Heart left ventricle (tissue), 16 donors: ENCODE measurements at regions of chr13 and their contacts with region 1.

Region 1: DNA sequence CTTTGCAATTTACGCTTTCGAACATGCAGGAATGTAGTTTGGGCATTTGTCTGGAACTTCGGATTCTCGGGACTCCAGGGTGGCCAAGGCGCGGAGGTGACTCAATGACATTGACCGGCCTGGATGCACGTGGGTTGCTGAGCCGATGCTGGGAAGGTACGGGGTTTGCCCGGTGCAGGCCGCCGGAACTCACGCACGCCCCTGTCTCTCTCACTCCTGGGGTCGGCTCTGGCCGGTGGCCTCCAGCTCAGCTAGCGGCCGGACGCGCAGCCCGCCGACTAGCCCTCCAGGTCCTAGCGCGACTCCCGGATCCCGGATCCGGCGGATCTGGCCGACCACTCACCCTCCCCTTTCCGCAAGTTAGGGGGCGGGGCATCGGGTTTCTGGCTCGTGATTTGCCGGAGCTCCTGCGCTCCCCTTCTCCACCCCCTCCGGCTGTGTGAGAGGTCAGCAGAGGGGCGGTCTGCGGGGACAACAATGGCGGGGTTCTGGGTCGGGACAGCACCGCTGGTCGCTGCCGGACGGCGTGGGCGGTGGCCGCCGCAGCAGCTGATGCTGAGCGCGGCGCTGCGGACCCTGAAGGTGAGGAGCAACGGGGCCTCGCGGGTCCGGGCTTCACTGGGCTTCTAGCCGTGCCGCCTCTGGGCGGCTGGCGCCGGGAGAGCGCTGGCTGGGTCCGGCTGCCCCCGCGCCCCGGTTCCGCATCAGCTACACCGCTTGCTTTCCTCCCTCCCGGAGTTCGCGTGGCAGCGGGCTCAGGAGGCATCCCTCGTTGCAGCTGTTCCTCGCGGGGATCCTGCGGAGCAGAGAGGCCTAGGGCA is at the start of gene PCCA:
- DNase-seq: peak; percentile 97 to 98 (median 97)
- ATAC-seq: peak; percentile 99 to 100 (median 100)
- H3K4me3 ChIP-seq: peak within 1 kb of the TSS; percentile 74 to 97 (median 90)
- H3K27ac ChIP-seq: peak within 1 kb of the TSS in 11 of 12 donors; percentile 68 to 84 (median 79)
- H3K4me1 ChIP-seq: peaks cover 0 to 32% (median 16%) of the 10 kb centered on the region in 12 donors
- H3K27me3 ChIP-seq: no peaks in the 10 kb centered on the region
- CTCF ChIP-seq: peak in 1 of 12 donors; percentile 15
- POLR2A ChIP-seq: peak in 1 of 2 donors; percentile 82
- total RNA-seq, gene PCCA: 30.7 to 67.0 (median 44.6) TPM

Region 2: DNA sequence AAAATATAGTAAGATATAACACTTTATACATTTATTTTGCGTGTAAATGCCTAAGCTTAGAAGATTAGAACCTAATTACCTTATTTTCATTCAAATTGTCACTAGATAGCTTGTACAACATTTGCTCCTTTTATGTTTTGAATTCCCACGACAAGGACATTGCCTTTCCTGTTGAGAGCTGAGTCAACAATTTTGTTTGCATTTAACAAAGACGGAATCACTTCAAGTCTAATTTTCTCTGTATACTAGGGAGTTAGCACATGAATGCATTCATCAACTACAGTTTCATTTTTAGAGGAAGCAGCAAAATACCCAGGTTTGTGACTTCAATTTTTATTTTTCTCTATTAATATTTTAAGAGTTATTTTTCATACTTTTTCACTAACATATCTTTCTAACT is 48.7 kb before region 1 on chr13:
- intact Hi-C with region 1: no loop called
- DNase-seq: no peak
- ATAC-seq: no peak
- H3K4me3 ChIP-seq: no peak overlapping the region
- H3K27ac ChIP-seq: no peak overlapping the region
- H3K4me1 ChIP-seq: no peaks in the 10 kb centered on the region
- H3K27me3 ChIP-seq: peaks cover 0 to 12% (median 0%) of the 10 kb centered on the region in 9 donors
- CTCF ChIP-seq: no peak
- POLR2A ChIP-seq: no peak

Region 3: DNA sequence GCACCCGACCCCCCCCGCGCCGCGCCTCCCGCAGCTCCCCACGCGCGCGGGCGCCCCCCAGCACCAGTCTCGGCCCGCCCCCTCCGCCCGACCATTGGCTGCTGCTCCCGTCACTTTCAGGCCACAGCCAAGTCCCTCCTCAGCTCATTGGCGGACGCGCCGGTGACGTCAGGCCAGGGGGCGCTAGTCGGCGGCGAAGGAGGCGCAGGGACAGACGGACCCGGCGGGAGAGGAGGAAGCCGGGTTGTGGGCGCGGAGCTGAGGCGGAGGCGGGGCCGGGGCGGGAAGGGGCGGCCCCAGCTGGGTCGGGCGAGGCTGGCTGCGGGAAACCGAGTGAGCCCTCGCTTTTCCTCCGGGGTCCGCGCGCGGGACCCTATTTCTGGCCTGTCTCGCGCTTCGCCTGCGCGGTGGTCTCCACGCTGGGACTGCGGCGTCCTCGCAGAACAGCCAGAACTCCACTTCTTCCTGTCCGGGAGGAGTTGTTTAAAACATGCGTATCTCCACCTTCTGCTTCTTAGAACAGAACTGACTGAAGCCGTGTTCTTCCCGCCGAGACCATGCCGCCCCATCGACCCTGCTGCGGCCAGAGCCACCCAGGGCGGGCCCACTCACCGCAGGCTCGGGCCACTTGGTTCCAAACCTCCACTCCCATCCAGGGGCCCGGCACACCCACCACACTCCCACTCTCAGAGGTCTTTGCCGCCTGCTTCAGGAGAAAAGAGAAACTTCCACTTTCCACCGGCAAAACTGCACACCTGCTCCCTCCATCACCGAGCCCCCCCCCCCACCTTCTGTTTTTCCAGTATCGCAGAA is 586.2 kb after region 1 on chr13:
- intact Hi-C with region 1: loop called in 1 of 10 experiments (anchors 5 kb)
- DNase-seq: peak; percentile 99 to 100 (median 100)
- ATAC-seq: peak; percentile 98 to 99 (median 98)
- H3K4me3 ChIP-seq: peak overlapping the region; percentile 43 to 96 (median 78)
- H3K27ac ChIP-seq: peak overlapping the region; percentile 65 to 92 (median 86)
- H3K4me1 ChIP-seq: peaks cover 0 to 20% (median 12%) of the 10 kb centered on the region in 12 donors
- H3K27me3 ChIP-seq: no peaks in the 10 kb centered on the region
- CTCF ChIP-seq: peak in 10 of 12 donors; percentile 31 to 61 (median 42)
- POLR2A ChIP-seq: peak in 1 of 2 donors; percentile 85